Dorsolateral prefrontal cortex (tissue), 120 donors: ENCODE measurements at regions of chr14 and their contacts with region 1.

Region 1: DNA sequence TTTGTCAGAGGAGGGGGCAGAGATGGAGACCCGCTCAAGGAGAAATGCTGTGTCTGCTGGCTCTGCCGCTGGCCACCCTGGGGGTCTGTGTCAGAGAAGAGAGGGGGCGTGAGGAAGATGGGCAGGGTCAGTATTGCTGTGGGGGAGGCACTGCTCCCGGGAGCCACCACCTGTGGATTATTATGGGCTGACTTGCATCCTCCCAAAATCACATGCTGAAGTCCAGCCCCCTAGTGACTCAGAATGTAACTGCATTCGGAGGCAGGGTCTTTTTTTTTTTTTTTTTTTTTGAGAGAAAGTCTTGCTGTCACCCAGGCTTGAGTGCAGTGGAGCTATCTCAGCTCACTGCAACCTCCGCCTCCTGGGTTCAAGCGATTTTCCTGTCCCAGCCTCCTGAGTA is 12.3 kb downstream of the ABCD4 start:
- DNase-seq: no peak
- H3K4me3 ChIP-seq: no peak overlapping the region
- H3K27ac ChIP-seq: peak overlapping the region in 28 of 59 donors; percentile 15 to 81 (median 56)
- H3K27me3 ChIP-seq: no peaks in the 10 kb centered on the region
- CTCF ChIP-seq: peak in 49 of 56 donors; percentile 14 to 59 (median 42)

Region 2: DNA sequence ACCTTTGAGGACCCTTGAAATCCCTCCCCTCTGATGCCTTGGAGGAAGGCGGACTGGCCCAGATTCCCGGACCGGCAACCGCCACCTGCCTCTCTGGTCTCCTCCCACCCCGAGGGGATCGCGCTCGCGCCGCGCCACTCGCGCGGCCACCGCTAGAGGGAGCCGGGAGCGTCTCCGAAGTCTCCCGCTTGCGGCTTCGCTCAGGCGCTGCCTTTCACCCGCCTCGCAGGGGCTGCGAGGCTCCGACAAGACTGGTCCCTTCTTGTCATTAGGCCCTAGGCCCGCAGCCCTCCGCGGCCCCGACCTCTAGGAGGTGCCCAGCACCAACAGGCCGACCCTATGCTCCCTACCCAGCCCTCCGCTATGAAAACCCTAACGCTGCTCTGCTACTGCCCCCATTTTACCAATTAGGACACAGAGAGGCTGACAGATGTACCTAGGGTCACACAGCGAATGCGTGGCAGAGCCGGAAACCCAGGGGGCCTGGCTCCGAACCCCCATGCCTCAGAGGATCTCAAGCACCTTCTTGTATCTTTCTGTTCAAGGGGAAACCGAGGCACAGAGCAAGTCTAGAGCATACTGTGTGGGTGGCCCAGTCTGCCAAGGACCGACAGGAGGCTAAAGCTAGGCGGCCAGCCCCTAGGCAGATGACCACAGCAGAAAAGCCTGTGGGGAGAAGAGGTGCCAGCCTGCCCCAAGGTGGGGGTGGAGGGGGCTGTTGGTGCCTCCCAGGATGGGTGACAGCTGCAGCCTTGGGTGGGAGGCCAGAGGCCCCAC is 72.6 kb before region 1 on chr14:
- intact Hi-C with region 1: loop called in 1 of 2 experiments (anchors 10 kb)
- DNase-seq: peak; percentile 45 to 83 (median 60)
- H3K4me3 ChIP-seq: peak overlapping the region in 47 of 59 donors; percentile 5 to 55 (median 35)
- H3K27ac ChIP-seq: no peak overlapping the region
- H3K27me3 ChIP-seq: peaks cover 0 to 39% (median 8%) of the 10 kb centered on the region in 45 donors
- CTCF ChIP-seq: peak; percentile 42 to 88 (median 80)